ENCODE measurements at regions of chr20 and their contacts with region 1.

Region 1: DNA sequence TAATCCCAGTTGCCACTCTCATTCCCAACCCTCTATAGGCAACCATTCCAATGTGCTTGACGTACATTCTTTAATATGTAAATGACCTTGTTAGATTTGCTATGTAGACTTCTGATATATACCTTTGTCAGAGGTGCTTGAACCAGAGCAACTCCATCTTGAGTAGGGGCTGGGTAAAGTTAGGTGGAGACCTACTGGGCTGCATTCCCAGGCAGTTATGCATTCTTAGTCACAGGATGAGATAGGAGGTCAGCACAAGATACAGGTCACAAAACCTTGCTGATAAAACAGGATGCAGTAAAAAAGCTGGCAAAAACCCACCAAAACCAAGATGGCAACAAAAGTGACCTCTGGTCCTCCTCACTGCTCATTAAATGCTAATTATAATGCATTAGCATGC is 8.3 kb upstream of the HM13 start:
- DNase-seq: no peak
- H3K4me3 Mint-ChIP-seq: no peak overlapping the region
- H3K27ac Mint-ChIP-seq: no peak overlapping the region
- H3K4me1 Mint-ChIP-seq: peaks cover 4% of the 10 kb centered on the region
- H3K27me3 Mint-ChIP-seq: peaks cover 4% of the 10 kb centered on the region

Region 2: DNA sequence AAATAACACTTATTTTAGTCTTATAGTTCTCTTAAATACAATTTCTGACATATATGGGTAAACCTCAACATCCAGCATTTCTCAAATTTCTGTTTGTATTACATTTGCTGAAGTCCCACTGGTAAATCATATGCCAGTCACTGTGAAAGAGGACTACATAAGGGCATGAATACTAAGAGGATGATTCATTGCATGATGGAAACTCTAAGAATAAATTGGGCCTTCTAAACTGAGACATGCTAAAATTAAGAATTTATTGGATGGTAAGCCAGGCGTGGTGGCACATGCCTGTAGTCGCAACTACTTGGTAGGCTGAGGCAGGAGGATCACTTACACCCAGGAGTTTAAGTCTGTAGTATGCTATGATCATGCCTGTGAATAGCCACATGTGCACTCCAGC is 53.3 kb before region 1 on chr20:
- CTCF ChIA-PET with region 1: interaction called, 188 read pairs
- POLR2A ChIA-PET with region 1: no interaction called
- intact Hi-C with region 1: no loop called
- DNase-seq: no peak
- H3K4me3 Mint-ChIP-seq: no peak overlapping the region
- H3K27ac Mint-ChIP-seq: no peak overlapping the region
- H3K4me1 Mint-ChIP-seq: no peaks in the 10 kb centered on the region
- H3K27me3 Mint-ChIP-seq: peaks cover 8% of the 10 kb centered on the region

Region 3: DNA sequence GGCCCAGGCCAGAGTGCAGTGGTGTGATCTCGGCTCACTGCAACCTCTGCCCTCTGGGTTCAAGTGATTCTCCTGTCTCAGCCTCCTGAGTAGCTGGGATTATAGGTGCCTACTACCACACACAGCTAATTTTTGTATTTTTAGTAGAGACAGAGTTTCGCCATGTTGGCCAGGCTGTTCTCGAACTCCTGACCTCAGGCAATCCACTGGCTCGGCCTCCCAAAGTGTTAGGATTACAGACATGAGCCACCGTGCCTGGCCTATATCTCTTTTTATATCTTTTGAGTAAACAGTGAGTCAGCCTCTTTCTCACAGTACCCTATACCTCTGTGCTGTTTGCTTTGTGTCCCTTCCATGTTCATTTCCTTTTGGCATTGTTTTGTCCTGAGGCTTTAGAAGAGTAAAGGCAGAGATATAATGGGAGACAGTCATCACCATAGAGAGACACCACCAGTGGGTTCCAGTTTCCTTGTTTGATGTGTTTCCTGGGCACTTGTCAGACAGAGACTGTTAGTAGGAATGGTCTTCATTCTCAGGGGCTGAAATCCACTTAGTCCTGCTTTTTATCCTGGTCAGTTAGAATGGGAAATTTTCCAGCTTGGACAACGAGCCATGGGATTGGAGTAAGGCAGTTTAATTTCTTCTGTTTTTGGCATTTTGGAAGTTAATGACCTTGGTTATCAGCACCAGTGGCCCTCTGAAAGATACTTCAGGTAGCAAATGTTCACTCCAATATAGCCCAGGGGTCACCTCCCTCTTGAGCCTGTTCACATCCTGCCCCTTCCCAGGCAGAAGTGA is 820.0 kb after region 1 on chr20:
- CTCF ChIA-PET with region 1: no interaction called
- POLR2A ChIA-PET with region 1: no interaction called
- intact Hi-C with region 1: no loop called
- DNase-seq: no peak
- H3K4me3 Mint-ChIP-seq: no peak overlapping the region
- H3K27ac Mint-ChIP-seq: peak overlapping the region; percentile 13
- H3K4me1 Mint-ChIP-seq: peaks cover 22% of the 10 kb centered on the region
- H3K27me3 Mint-ChIP-seq: no peaks in the 10 kb centered on the region